Testis (tissue), 5 donors: ENCODE measurements at regions of chr6 and their contacts with region 1.

Region 1: DNA sequence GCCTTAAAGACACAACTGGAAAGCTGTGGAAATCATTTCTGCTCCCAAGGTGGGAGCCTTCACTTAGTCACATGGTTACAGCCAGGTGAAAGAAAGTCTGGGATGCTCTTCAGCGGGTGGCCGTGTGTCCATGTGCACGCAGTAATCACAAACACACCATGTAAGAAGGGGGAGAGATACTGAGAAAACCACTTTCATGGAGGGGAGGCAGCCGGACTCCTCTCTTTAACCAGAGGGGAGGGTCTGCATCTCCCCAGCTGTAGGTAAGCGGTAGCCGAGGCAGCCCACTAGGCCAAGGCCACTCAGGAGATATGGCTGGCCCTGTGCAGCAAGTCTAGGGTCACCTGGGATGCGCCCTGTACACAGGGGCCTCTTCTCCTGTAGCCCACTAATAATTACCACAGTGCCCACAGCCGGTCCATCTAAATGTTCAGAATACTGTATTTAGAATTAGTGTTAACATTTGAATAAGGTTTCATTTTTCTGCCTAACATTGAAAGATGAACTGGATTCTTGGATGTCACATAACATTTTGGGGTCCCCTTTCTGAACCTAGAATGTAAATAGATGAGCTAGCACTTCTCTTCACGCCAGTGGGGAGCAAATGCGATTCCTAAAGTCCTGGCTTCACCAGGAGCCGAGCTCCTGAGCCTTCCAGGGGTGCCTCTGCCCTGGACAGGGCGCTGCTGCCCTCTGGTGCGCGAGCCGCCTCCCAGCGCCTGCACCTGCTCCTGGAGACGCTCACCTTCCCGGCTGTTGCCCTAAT is 15.9 kb downstream of the GPR31 start:
- DNase-seq: peak; percentile 56
- H3K4me3 ChIP-seq: no peak overlapping the region
- H3K27ac ChIP-seq: no peak overlapping the region
- H3K4me1 ChIP-seq: no peaks in the 10 kb centered on the region
- H3K27me3 ChIP-seq: no peaks in the 10 kb centered on the region
- CTCF ChIP-seq: peak in 2 of 3 experiments; percentile 43 to 63
- POLR2A ChIP-seq: no peak

Region 2: GRCh38 chr6:166775180-166776081 is 366.4 kb before region 1 on chr6:
- intact Hi-C with region 1: loop called (anchors 10 kb)
- DNase-seq: peak; percentile 87
- H3K4me3 ChIP-seq: no peak overlapping the region
- H3K27ac ChIP-seq: no peak overlapping the region
- H3K4me1 ChIP-seq: peaks cover 5% of the 10 kb centered on the region
- H3K27me3 ChIP-seq: no peaks in the 10 kb centered on the region
- CTCF ChIP-seq: peak; percentile 74 to 92 (median 83)
- POLR2A ChIP-seq: no peak

Region 3: GRCh38 chr6:167056370-167056769 is 85.5 kb before region 1 on chr6:
- intact Hi-C with region 1: no loop called
- DNase-seq: no peak
- H3K4me3 ChIP-seq: no peak overlapping the region
- H3K27ac ChIP-seq: no peak overlapping the region
- H3K4me1 ChIP-seq: no peaks in the 10 kb centered on the region
- H3K27me3 ChIP-seq: no peaks in the 10 kb centered on the region
- CTCF ChIP-seq: no peak
- POLR2A ChIP-seq: no peak

Region 4: DNA sequence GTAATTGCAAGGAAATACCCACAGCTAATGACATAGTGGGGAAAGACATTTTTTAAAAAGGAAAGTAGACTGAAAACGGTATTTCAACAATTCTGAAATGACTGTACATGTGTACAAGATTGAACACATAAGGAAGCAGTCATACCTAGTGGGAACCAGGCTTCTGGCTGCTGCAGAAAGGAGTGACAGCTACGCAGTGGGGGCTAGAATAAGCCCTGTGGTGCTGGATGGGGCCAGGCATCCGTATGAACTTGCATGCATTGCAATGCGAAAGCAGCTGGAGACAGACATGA is 70.8 kb after region 1 on chr6:
- intact Hi-C with region 1: no loop called
- DNase-seq: no peak
- H3K4me3 ChIP-seq: no peak overlapping the region
- H3K27ac ChIP-seq: no peak overlapping the region
- H3K4me1 ChIP-seq: no peaks in the 10 kb centered on the region
- H3K27me3 ChIP-seq: no peaks in the 10 kb centered on the region
- CTCF ChIP-seq: no peak
- POLR2A ChIP-seq: no peak